Lower leg skin (tissue), 4 donors: ENCODE measurements at regions of chr3 and their contacts with region 1.

Region 1: GRCh38 chr3:39288300-39288808 is 8.5 kb upstream of the CX3CR1 start:
- DNase-seq: peak; percentile 70 to 93
- H3K4me3 ChIP-seq: no peak overlapping the region
- CTCF ChIP-seq: peak in 1 of 3 donors; percentile 76
- POLR2A ChIP-seq: no peak

Region 2: GRCh38 chr3:39126532-39127071 is 161.8 kb before region 1 on chr3:
- intact Hi-C with region 1: loop called (anchors 5 kb)
- DNase-seq: no peak
- H3K4me3 ChIP-seq: no peak overlapping the region
- CTCF ChIP-seq: no peak
- POLR2A ChIP-seq: no peak

Region 3: GRCh38 chr3:39189959-39190269 is 98.4 kb before region 1 on chr3:
- intact Hi-C with region 1: loop called (anchors 5 kb)
- DNase-seq: peak in 1 of 2 donors; percentile 90
- H3K4me3 ChIP-seq: no peak overlapping the region
- CTCF ChIP-seq: no peak
- POLR2A ChIP-seq: no peak

Region 4: DNA sequence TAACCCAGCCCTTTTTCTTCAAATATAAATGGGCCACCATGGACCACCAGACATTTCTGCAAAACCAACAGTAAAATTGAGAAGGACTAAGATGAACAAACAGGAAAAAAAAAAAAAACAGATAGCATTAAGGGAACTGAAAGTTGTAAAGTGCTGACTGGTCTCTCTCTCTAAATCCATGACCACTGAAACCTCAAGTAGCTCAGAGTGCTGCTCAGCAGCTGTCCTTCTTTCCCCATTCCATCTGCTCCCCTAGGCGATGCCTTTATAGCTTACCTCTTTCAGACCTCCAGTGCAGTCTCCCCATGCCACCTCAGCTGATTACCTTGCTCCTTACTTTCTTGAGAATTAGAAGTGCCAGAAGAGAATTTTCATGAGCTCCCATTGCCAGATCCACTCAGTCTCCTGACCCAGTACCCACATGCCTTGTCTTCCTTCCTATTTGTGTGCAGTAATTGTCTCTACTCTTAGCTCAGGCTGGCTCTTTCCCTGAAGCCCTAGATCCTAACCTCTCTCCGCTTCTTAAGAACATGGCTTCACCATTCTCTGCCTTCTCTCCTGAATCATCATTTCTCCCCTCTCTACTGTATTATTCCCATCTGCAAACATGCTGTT is 72.1 kb before region 1 on chr3:
- intact Hi-C with region 1: loop called (anchors 10 kb)
- DNase-seq: no peak
- H3K4me3 ChIP-seq: no peak overlapping the region
- CTCF ChIP-seq: no peak
- POLR2A ChIP-seq: no peak